Ascending aorta (tissue), 2 donors: ENCODE measurements at regions of chr19 and their contacts with region 1.

Region 1: GRCh38 chr19:40640744-40641143 is 39.6 kb downstream of the LTBP4 start:
- DNase-seq: peak in 1 of 2 donors; percentile 78
- H3K4me3 ChIP-seq: peak overlapping the region in 1 of 2 donors; percentile 24
- H3K27ac ChIP-seq: peak overlapping the region; percentile 92
- H3K4me1 ChIP-seq: peaks cover 17 to 25% of the 10 kb centered on the region in 2 donors
- H3K27me3 ChIP-seq: no peaks in the 10 kb centered on the region
- CTCF ChIP-seq: no peak

Region 2: GRCh38 chr19:40529093-40529954 is 111.4 kb before region 1 on chr19:
- intact Hi-C with region 1: no loop called
- DNase-seq: peak; percentile 61 to 91
- H3K4me3 ChIP-seq: peak overlapping the region; percentile 58 to 62
- H3K27ac ChIP-seq: no peak overlapping the region
- H3K4me1 ChIP-seq: peaks cover 2 to 5% of the 10 kb centered on the region in 2 donors
- H3K27me3 ChIP-seq: no peaks in the 10 kb centered on the region
- CTCF ChIP-seq: peak; percentile 96 to 99 (median 98)

Region 3: GRCh38 chr19:40603389-40604135 is 37.2 kb before region 1 on chr19:
- intact Hi-C with region 1: loop called (anchors 2 kb)
- DNase-seq: peak; percentile 96 to 99
- H3K4me3 ChIP-seq: peak overlapping the region; percentile 75 to 92
- H3K27ac ChIP-seq: peak overlapping the region; percentile 88 to 95
- H3K4me1 ChIP-seq: peaks cover 11 to 44% of the 10 kb centered on the region in 2 donors
- H3K27me3 ChIP-seq: no peaks in the 10 kb centered on the region
- CTCF ChIP-seq: no peak

Region 4: GRCh38 chr19:40663695-40664692 is 23.2 kb after region 1 on chr19:
- intact Hi-C with region 1: no loop called
- DNase-seq: no peak
- H3K4me3 ChIP-seq: peak overlapping the region; percentile 64 to 77
- H3K27ac ChIP-seq: peak overlapping the region; percentile 80 to 84
- H3K4me1 ChIP-seq: peaks cover 3 to 13% of the 10 kb centered on the region in 2 donors
- H3K27me3 ChIP-seq: no peaks in the 10 kb centered on the region
- CTCF ChIP-seq: no peak